HCT116 (cell line): ENCODE measurements at regions of chr20 and their contacts with region 1.

Region 1: DNA sequence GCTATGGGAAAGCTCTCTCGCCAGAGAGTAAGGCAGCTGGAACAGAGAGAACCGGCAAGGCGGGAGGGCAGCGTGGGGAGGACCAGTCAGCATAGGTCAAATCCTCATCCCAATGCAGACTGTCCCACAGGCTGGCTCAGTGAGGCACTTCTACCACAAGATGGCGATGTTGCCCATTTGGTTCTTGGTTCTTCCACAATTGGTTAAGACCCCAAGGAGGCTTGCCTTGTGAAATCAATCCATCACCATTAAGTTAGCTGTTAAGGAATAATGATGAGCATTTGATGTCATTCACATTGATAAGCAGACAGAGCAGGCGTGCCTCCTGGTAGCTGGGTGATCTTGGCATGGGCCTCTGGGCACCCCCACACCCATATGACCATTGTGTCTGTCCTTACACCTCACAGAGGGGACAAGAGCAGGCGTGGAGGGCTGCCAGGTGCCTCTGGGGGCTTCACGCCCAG is 2.4 kb downstream of the CSTL1 start:
- DNase-seq: peak; percentile 69
- ATAC-seq: peak; percentile 92
- H3K4me3 ChIP-seq: no peak overlapping the region
- H3K27ac ChIP-seq: no peak overlapping the region
- H3K4me1 ChIP-seq: peaks cover 0 to 7% of the 10 kb centered on the region in 2 experiments; a peak in 1 of 4 replicates
- H3K27me3 ChIP-seq: no peaks in the 10 kb centered on the region; the same call in 1 of the 2 replicates
- CTCF ChIP-seq: peak; percentile 61 to 93 (median 91); a peak in 5 of 6 replicates
- POLR2A ChIP-seq: no peak
- RAD21 ChIP-seq: peak; percentile 74

Region 2: DNA sequence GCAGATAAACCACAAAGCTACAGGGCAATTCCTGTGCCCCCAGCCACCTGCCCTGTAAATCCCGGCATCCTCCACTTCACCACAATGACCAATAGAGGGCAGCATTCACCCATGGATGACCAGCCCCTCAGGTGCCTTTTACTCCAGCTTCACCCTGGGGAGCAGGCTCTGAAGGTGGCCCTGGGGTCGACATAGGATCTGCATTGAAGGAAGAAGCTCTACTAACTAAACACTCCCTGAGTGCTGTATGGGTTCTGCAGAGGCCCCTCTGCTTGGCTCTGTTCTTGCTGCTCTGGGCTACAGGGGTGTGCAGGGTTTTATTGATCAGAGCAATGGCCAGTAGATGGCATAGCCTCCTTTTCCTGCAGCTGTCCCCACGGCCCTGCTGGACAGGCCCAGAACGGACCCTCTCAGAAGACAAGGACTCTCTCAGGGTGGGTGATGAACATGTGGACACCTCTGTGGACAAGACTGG is 226.6 kb after region 1 on chr20:
- CTCF ChIA-PET with region 1: interaction called, 5 read pairs
- POLR2A ChIA-PET with region 1: no interaction called
- RAD21 ChIA-PET with region 1: no interaction called
- intact Hi-C with region 1: loop called (anchors 5 kb)
- DNase-seq: peak; percentile 54
- ATAC-seq: peak; percentile 95
- H3K4me3 ChIP-seq: no peak overlapping the region
- H3K27ac ChIP-seq: no peak overlapping the region
- H3K4me1 ChIP-seq: no peaks in the 10 kb centered on the region
- H3K27me3 ChIP-seq: peaks cover 2% of the 10 kb centered on the region; the same call in 1 of the 2 replicates
- CTCF ChIP-seq: peak; percentile 81 to 92 (median 89)
- POLR2A ChIP-seq: no peak
- RAD21 ChIP-seq: peak; percentile 77